Dorsolateral prefrontal cortex (tissue), 120 donors: ENCODE measurements at regions of chr11 and their contacts with region 1.

Region 1: DNA sequence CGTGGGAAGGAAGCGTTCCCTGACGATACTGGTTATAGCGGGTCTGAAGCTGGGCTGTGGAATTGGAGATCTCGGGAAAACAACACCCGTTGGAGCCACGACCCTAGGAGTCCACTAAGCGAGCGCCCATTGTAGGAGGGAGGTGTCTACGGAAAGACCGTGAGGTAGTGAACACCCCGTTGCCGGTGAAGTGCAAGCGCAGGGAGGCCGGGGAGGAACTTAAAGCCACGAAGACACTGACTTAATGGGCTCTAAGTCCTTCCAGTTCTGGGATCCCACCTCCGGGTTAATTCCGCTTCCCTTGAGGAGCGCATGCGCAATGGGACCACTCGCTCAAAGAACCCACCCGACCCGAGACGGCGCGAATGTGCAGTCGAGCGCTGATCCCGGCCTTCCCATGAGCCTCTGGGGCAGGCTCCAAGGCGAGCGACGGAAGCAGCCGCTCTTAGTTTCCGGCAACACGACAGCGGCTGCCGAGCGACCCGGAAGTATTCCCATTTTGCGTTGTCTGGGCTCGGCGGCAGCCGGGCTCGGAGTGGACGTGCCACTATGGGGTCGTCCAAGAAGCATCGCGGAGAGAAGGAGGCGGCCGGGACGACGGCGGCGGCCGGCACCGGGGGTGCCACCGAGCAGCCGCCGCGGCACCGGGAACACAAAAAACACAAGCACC is at the start of gene SART1:
- DNase-seq: peak; percentile 95 to 98 (median 97)
- H3K4me3 ChIP-seq: peak within 1 kb of the TSS; percentile 69 to 100 (median 98)
- H3K27ac ChIP-seq: peak within 1 kb of the TSS; percentile 64 to 98 (median 92)
- H3K27me3 ChIP-seq: no peaks in the 10 kb centered on the region
- CTCF ChIP-seq: peak in 51 of 56 donors; percentile 15 to 70 (median 45)
- total RNA-seq, gene SART1: 31.8 to 73.9 (median 52.1) TPM

Region 2: DNA sequence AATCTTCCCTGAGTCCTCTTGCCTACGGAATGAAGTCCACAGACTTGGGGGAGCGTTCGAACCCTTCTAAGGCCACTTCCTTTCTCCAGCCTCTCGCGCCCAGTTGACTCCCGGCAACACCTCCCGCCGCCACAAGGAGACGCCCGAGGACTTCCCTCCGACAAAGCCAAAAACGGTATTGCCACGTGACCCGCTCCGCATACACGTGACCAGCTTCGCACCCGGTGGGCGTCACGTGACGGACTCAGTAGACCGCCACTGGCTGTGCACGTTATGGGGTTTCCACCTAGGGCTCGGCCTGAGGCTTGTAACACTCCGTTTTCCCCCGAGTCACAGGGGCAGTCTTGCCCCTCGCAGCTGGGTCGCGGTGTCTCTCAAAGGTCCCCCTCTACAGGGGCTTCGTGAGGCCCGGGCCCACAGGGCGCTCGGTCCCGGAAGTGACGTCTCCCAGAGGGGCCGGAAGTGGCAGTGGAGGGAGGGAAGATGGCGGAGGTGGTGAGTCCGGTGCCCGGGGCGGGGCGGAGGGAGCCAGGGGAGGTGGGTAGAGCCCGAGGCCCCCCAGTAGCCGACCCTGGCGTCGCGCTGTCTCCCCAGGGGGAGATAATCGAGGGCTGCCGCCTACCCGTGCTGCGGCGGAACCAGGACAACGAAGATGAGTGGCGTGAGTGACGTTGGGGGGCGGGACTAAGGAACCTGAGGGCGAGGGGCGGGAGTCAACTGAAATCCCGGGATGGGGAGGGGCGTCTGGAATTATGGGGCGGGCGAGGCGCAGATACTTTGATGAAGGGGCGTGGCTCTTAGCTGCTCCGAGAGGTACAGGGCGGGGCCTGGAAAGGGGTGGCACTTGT is 249.4 kb before region 1 on chr11 and contains the start of gene KAT5:
- intact Hi-C with region 1: loop called in 1 of 2 experiments (anchors 10 kb)
- DNase-seq: peak; percentile 97 to 99 (median 98)
- H3K4me3 ChIP-seq: peak within 1 kb of the TSS; percentile 58 to 100 (median 84)
- H3K27ac ChIP-seq: peak within 1 kb of the TSS; percentile 96 to 100 (median 100)
- H3K27me3 ChIP-seq: no peaks in the 10 kb centered on the region
- CTCF ChIP-seq: peak; percentile 92 to 100 (median 99)
- total RNA-seq, gene KAT5: 57.1 to 97.9 (median 76.4) TPM

Region 3: GRCh38 chr11:65888163-65888814 is 73.1 kb before region 1 on chr11 and contains the start of gene FIBP:
- intact Hi-C with region 1: loop called (anchors 1 to 2 kb)
- DNase-seq: peak; percentile 94 to 98 (median 97)
- H3K4me3 ChIP-seq: peak within 1 kb of the TSS; percentile 52 to 99 (median 86)
- H3K27ac ChIP-seq: peak within 1 kb of the TSS; percentile 81 to 100 (median 97)
- H3K27me3 ChIP-seq: no peaks in the 10 kb centered on the region
- CTCF ChIP-seq: peak; percentile 45 to 93 (median 80)
- total RNA-seq, gene FIBP: 56.1 to 115 (median 86.6) TPM

Region 4: DNA sequence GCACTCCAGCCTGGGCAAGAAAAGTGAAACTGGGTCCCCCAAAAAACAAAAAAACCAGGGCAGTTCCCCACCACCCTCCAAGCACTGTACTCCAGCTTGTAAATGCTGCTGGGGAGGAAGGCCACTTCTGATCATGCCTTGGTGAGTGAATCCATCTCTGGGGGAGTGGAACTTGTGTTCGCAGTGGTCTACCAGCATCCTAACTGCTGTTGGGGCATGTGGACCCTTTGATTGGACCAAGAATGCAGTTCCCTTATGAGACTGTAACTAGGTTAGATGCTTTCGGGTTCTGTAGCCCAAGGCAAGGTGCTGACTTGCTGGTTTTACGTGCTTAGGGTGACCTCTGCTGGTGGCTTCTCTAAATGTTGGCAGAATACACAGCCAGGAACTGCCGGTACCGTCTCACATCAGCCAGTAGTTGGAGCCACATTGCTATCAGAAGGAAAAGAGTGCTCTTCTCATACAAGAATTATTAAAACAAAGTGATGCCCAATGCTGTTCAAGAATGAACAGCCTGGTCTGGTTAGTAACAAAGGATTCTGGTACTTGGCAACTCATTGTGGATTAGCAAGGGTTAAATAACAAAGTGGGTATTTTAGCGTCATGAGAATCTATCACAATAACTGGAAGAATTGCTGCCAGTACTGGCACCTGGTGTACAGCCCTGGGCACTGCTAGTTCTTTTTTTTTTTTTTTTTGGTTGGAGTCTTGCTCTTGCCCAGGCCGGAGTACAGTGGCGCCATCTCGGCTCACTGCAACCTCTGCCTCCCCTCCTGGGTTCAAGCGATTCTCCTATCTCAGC is 27.6 kb after region 1 on chr11:
- intact Hi-C with region 1: loop called in 1 of 2 experiments (anchors 1 kb)
- DNase-seq: peak; percentile 53 to 97 (median 88)
- H3K4me3 ChIP-seq: peak overlapping the region in 4 of 59 donors; percentile 6 to 26 (median 16)
- H3K27ac ChIP-seq: peak overlapping the region in 19 of 59 donors; percentile 0 to 67 (median 37)
- H3K27me3 ChIP-seq: no peaks in the 10 kb centered on the region
- CTCF ChIP-seq: peak; percentile 74 to 99 (median 95)